GM10248 (cell line): ENCODE measurements at regions of chr17 and their contacts with region 1.

Region 1: DNA sequence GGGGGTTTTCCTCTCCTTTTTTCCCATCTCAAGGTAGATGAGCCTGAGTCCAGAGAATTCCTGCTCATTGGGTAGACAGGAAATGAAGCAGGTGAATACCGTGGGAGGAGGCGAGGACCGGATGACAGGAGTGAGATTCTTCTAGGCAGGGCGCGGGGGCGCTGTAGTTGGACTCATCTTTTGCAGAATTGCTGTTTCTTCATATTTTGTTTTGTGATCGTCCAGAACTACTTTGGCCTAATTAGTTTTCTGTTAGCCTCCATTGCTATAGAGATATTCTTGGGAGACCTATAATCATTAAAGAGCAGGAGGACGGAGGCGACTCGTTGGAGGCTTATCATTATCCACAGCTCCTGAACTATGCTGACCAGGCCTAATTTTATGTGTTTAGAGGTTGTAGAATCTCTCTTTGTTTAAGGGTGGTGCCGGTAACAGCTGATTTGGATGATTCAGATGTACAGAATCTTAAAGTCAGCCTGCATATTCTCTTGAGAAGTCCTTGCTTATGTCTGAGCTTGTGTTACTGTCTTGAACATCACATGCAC is 650 bp downstream of the ATP6V0A1 start:
- DNase-seq: no peak
- CTCF ChIP-seq: peak; percentile 52

Region 2: GRCh38 chr17:42475835-42476234 is 16.5 kb after region 1 on chr17:
- CTCF ChIA-PET with region 1: interaction called, 15 read pairs
- POLR2A ChIA-PET with region 1: interaction called, 3 read pairs
- DNase-seq: no peak
- CTCF ChIP-seq: no peak

Region 3: GRCh38 chr17:42488032-42488431 is 28.7 kb after region 1 on chr17:
- CTCF ChIA-PET with region 1: interaction called, 11 read pairs
- POLR2A ChIA-PET with region 1: no interaction called
- DNase-seq: no peak
- CTCF ChIP-seq: no peak